ENCODE measurements at regions of chr12 and their contacts with region 1.

Region 1: DNA sequence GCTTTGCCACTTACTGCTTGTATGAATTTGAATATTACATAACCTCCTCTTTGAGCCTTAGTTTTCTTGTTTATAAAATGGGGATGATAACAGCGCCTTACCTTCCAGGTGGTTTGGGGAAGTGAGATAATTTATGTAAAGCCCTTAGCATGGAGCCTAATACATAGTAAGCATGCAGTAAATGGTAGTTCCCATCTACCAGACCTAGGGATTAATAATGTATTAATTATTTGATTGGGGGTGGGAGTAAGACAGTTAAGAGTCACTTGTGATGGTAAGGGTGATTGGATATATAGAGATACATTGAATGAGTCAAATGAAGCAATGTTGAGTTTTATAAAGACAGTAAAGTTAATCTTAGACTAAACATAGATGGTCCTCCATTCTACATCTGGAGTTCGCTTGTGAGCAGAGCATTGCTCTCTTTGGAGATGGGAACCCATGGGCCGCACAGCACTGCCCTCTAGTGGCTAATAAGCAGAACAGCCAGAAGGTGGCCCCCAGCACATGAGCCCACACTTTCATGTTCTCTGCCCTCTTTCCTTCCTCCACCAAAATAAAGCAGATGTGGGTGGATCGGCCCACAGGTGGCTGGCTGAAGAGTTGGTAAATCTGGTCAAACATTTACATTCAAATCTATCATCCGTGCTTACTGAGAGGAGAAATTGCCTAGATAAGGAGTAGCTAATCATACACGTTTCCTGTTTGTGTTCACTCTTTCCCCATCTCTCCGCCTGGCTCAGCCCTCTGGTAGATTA is 26.5 kb upstream of the TAMALIN start:
- DNase-seq: peak; percentile 50 to 80 (median 66)
- H3K4me3 ChIP-seq: no peak overlapping the region
- H3K27ac ChIP-seq: peak overlapping the region in 1 of 59 donors; percentile 42
- H3K27me3 ChIP-seq: no peaks in the 10 kb centered on the region
- CTCF ChIP-seq: peak; percentile 83 to 99 (median 96)

Region 2: DNA sequence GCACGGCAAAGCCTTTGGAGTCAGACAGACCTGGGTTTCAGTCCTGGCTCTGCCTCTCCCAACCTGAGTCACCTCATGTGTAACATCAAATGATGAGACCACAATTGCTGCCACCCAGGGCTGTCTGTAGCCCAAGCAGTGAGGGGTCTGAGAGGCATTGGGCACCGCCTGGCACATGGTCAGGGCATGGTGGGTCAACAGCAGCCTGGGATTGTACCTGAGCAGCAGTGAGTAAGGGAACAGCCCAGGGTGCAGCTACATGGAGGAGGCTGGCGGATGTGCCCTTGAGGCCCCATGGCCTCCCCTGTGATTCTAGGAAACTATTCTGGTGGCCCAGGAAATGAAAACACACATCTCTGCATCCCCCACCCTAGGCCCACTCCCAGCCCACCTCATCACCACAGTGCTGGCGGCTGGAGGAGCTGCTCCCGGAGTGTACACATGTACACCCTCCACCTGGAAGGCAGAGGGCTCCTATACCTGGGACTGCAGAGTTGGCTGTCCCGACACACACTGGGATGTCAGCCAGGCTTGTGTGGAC is 84.7 kb before region 1 on chr12:
- intact Hi-C with region 1: loop called in 1 of 2 experiments (anchors 2 kb)
- DNase-seq: no peak
- H3K4me3 ChIP-seq: no peak overlapping the region
- H3K27ac ChIP-seq: no peak overlapping the region
- H3K27me3 ChIP-seq: peaks cover 0 to 3% (median 0%) of the 10 kb centered on the region in 45 donors
- CTCF ChIP-seq: no peak

Region 3: GRCh38 chr12:51905471-51906429 is 74.5 kb before region 1 on chr12:
- intact Hi-C with region 1: loop called in 1 of 2 experiments (anchors 5 kb)
- DNase-seq: peak in 1 of 10 donors; percentile 12
- H3K4me3 ChIP-seq: peak overlapping the region in 5 of 59 donors; percentile 56 to 63 (median 58)
- H3K27ac ChIP-seq: peak overlapping the region in 43 of 59 donors; percentile 4 to 80 (median 55)
- H3K27me3 ChIP-seq: peaks cover 0 to 32% (median 19%) of the 10 kb centered on the region in 45 donors
- CTCF ChIP-seq: no peak